ENCODE measurements at regions of chr6 and their contacts with region 1.

Region 1: GRCh38 chr6:107803957-107804356 is 20.2 kb downstream of the SCML4 start:
- DNase-seq: no peak
- H3K27ac ChIP-seq: no peak overlapping the region
- CTCF ChIP-seq: no peak

Region 2: GRCh38 chr6:107866606-107867301 is 62.8 kb after region 1 on chr6:
- CTCF ChIA-PET with region 1: interaction called, 11 read pairs
- POLR2A ChIA-PET with region 1: no interaction called
- DNase-seq: peak; percentile 27
- H3K27ac ChIP-seq: no peak overlapping the region
- CTCF ChIP-seq: peak; percentile 37; the same call in 1 of the 2 replicates

Region 3: GRCh38 chr6:107894821-107895396 is 91.0 kb after region 1 on chr6:
- CTCF ChIA-PET with region 1: no interaction called
- POLR2A ChIA-PET with region 1: no interaction called
- DNase-seq: no peak
- H3K27ac ChIP-seq: no peak overlapping the region
- CTCF ChIP-seq: no peak